Gastrocnemius medialis (tissue), 4 donors: ENCODE measurements at regions of chr4 and their contacts with region 1.

Region 1: DNA sequence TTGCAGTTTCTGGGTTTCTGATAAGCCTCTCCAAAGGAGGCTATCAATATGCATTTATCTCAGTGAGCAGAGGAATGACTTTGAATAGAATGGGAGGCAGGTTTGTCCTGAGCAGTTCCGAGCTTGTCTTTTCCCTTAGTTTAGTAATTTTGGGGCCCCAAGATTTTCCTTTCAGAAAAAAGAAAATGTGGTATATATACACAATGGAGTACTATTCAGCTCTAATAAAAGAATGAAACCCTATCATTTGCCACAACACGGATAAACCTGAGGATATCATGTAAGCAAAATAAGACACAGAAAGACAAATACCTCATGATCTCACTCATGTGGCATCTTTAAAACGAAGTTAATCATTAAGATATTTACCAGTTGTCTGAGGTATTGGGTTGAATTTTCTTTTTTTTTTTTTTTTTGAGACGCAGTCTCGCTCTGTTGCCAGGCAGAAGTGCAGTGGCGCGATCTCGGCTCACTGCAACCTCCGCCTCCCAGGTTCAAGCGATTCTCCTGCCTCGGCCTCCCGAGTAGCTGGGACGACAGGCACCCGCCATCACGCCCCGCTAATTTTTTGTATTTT is 540 bp downstream of the ZNF721 start:
- DNase-seq: no peak
- ATAC-seq: peak in 1 of 2 donors; percentile 8
- H3K4me3 ChIP-seq: peak overlapping the region; percentile 89 to 95 (median 94)
- H3K27ac ChIP-seq: peak overlapping the region; percentile 83 to 94 (median 88)
- H3K4me1 ChIP-seq: peaks cover 11 to 22% of the 10 kb centered on the region in 2 donors
- H3K27me3 ChIP-seq: no peaks in the 10 kb centered on the region
- CTCF ChIP-seq: no peak
- POLR2A ChIP-seq: no peak

Region 2: DNA sequence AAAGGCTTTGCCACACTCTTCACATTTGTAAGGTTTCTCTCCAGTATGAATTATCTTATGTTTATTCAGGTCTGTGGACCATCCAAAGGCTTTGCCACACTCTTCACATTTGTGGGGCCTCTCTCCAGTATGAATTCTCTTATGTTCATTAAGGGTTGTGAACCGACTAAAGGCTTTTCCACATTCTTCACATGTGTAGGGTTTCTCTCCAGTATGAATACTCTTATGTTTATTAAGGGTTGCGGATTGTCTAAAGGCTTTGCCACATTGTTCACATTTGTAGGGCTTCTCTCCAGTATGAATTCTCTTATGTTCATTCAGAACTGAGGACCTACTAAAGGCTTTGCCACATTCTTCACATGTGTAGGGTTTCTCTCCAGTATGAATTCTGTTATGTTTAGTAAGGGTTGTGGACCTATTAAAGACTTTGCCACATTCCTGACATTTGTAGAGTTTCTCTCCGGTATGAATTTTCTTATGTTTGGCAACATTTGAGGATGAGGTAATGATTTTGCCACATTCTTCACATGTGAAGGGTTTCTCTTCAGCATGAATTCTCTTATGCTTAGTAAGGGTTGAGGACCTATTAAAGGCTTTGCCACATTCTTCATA is 226.8 kb before region 1 on chr4:
- in situ Hi-C with region 1: no loop called
- intact Hi-C with region 1: no loop called
- DNase-seq: no peak
- ATAC-seq: no peak
- H3K4me3 ChIP-seq: peak overlapping the region in 1 of 4 donors; percentile 31
- H3K27ac ChIP-seq: no peak overlapping the region
- H3K4me1 ChIP-seq: no peaks in the 10 kb centered on the region
- H3K27me3 ChIP-seq: no peaks in the 10 kb centered on the region
- CTCF ChIP-seq: no peak
- POLR2A ChIP-seq: no peak

Region 3: GRCh38 chr4:337143-337931 is 161.1 kb before region 1 on chr4 and contains the start of gene ZNF141:
- in situ Hi-C with region 1: no loop called
- intact Hi-C with region 1: loop called (anchors 2 kb)
- DNase-seq: peak; percentile 94
- ATAC-seq: peak; percentile 98 to 99
- H3K4me3 ChIP-seq: peak within 1 kb of the TSS; percentile 88 to 99 (median 94)
- H3K27ac ChIP-seq: peak within 1 kb of the TSS; percentile 82 to 93 (median 90)
- H3K4me1 ChIP-seq: peaks cover 5 to 9% of the 10 kb centered on the region in 2 donors
- H3K27me3 ChIP-seq: no peaks in the 10 kb centered on the region
- CTCF ChIP-seq: no peak
- POLR2A ChIP-seq: peak; percentile 69 to 80
- total RNA-seq, gene ZNF141: 1.4 to 5.7 (median 2.0) TPM

Region 4: GRCh38 chr4:453267-453666 is 45.1 kb before region 1 on chr4:
- in situ Hi-C with region 1: no loop called
- intact Hi-C with region 1: no loop called
- DNase-seq: no peak
- ATAC-seq: no peak
- H3K4me3 ChIP-seq: no peak overlapping the region
- H3K27ac ChIP-seq: no peak overlapping the region
- H3K4me1 ChIP-seq: no peaks in the 10 kb centered on the region
- H3K27me3 ChIP-seq: no peaks in the 10 kb centered on the region
- CTCF ChIP-seq: no peak
- POLR2A ChIP-seq: no peak

Region 5: DNA sequence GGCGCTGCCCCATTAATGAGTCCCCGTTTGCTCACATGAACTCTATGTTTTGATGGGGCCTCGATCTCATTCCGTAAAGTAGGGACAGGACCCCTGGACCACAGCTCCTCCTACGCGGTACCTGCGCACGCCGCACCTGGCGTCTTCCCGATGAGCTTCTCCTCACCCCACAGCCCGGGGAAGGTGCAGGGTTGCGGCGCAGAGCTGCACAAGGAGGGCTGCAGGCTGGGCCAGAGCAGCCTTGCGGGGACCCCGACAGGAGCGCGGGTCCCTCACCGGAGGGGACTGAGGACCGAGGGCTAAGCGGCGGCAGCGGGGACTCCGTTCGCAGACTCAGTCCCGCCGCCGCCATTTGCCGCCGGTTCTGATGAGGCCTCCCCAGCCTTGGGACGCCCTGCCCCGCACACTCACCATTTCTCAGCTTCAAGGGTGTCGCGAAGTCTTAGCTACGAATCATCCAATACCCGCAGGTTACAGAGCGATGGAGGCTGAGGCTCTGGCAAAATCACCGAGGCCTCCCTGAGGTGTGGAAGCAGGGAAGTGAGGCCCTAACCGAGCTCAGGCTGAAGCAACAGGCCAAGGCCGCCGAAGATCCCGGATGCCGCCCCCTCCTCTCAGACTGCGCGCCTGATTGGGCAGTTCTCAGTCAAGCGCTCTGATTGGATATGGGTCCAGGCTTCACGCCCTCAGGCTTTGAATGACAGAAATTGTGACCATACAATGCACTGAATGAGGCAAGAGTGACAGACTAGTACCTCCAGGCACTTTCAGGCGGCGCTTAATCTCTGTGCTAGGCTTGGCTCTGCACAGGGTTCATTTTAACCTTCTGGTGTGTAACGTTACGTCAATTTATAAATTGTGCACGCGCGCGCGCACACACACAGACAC is 24.6 kb before region 1 on chr4:
- in situ Hi-C with region 1: no loop called
- intact Hi-C with region 1: loop called (anchors 1 kb)
- DNase-seq: peak; percentile 95 to 96
- ATAC-seq: peak; percentile 100
- H3K4me3 ChIP-seq: peak overlapping the region; percentile 80 to 98 (median 93)
- H3K27ac ChIP-seq: peak overlapping the region; percentile 83 to 95 (median 92)
- H3K4me1 ChIP-seq: peaks cover 0 to 12% of the 10 kb centered on the region in 2 donors
- H3K27me3 ChIP-seq: no peaks in the 10 kb centered on the region
- CTCF ChIP-seq: no peak
- POLR2A ChIP-seq: peak; percentile 62 to 74

Region 6: GRCh38 chr4:674172-675035 is 176.0 kb after region 1 on chr4 and contains the starts of genes ATP5ME and MYL5:
- in situ Hi-C with region 1: no loop called
- intact Hi-C with region 1: loop called (anchors 10 kb)
- DNase-seq: peak; percentile 94 to 96
- ATAC-seq: peak; percentile 91 to 94
- H3K4me3 ChIP-seq: peak within 1 kb of the TSS; percentile 88 to 99 (median 98)
- H3K27ac ChIP-seq: peak within 1 kb of the TSS; percentile 90 to 99 (median 97)
- H3K4me1 ChIP-seq: peaks cover 31 to 48% of the 10 kb centered on the region in 2 donors
- H3K27me3 ChIP-seq: peaks cover 0 to 5% (median 0%) of the 10 kb centered on the region in 3 donors
- CTCF ChIP-seq: peak; percentile 79 to 97 (median 88)
- POLR2A ChIP-seq: peak; percentile 79 to 93
- total RNA-seq, gene ATP5ME: 24.7 to 172 (median 91.5) TPM
- total RNA-seq, gene MYL5: 1.3 to 20.3 (median 3.6) TPM